Dorsolateral prefrontal cortex (tissue), 120 donors: ENCODE measurements at regions of chr14 and their contacts with region 1.

Region 1: DNA sequence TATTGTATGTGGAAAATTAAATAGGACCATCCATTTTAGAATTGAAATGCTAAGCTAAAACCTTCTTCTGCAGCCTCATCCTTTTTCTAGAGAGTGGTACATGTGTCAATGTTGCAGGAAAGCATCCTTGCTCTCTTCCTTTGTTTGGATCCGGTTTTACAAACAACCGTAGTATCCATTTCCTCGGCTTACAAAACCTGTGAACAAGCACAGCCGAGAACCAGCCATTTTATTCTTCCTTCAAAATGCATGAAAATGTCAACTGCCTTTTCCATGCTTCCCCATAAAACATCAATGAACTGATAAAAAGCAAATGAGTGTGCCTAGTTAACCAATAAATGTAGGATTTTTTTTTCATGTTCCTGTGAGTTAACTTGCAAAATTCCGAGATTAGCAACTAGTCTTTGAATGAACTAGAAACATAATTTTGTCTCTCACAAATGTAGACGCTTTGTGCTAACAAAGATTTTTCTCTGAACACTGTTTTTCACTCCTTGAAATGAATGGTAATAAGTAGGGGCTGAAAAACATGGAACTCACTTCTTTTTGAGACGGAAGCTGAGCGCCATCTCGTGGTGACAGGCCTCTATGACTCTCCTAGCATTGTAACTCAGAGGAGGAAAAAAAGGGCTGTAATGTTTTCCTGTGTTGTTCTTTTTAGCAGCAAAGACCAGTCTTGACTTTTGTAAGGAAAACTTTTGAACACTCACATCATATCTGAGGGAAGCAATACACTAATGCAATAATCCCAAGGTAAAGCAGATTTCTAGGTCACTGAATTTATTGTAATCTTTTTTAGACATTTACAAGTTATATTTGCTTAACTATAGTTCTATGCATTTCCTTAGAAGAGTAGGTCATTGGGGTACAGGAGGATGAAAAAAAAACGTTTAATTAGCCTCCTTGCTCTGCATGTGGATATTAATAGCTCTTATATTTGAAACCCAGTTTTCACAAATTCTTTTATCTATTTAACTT is 157.4 kb upstream of the FOXG1 start:
- DNase-seq: peak; percentile 35 to 91 (median 76)
- H3K4me3 ChIP-seq: peak overlapping the region in 57 of 59 donors; percentile 4 to 59 (median 37)
- H3K27ac ChIP-seq: peak overlapping the region; percentile 1 to 94 (median 83)
- H3K27me3 ChIP-seq: no peaks in the 10 kb centered on the region
- CTCF ChIP-seq: peak; percentile 74 to 95 (median 90)

Region 2: GRCh38 chr14:28142400-28143015 is 466.6 kb before region 1 on chr14:
- intact Hi-C with region 1: loop called in 1 of 2 experiments (anchors 5 kb)
- DNase-seq: peak in 1 of 10 donors; percentile 29
- H3K4me3 ChIP-seq: peak overlapping the region in 15 of 59 donors; percentile 2 to 54 (median 27)
- H3K27ac ChIP-seq: peak overlapping the region in 40 of 59 donors; percentile 3 to 80 (median 50)
- H3K27me3 ChIP-seq: no peaks in the 10 kb centered on the region
- CTCF ChIP-seq: peak in 54 of 56 donors; percentile 5 to 73 (median 60)

Region 3: GRCh38 chr14:28294834-28295440 is 314.2 kb before region 1 on chr14:
- intact Hi-C with region 1: loop called in 1 of 2 experiments (anchors 10 kb)
- DNase-seq: no peak
- H3K4me3 ChIP-seq: no peak overlapping the region
- H3K27ac ChIP-seq: no peak overlapping the region
- H3K27me3 ChIP-seq: no peaks in the 10 kb centered on the region
- CTCF ChIP-seq: peak in 8 of 56 donors; percentile 9 to 25 (median 17)

Region 4: DNA sequence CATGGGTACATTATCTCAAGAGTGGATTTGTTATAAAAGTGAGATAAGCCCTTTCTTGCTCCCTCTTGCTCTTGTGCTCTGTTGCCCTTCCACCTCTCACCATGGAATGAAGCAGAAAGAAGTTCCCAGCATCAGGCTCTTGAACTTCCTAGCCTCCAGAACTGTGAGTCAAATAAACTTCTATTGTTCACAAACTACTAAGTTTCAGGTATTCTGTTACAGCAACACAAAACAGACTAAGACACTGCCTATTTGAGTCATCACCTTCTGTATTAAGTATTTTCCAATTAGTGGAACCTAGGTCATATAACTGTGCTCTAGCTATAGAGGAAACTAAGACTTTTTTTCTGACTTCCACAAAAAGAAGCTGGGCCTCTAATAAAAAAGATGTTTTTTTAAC is 43.8 kb before region 1 on chr14:
- intact Hi-C with region 1: no loop called
- DNase-seq: no peak
- H3K4me3 ChIP-seq: no peak overlapping the region
- H3K27ac ChIP-seq: no peak overlapping the region
- H3K27me3 ChIP-seq: no peaks in the 10 kb centered on the region
- CTCF ChIP-seq: no peak

Region 5: DNA sequence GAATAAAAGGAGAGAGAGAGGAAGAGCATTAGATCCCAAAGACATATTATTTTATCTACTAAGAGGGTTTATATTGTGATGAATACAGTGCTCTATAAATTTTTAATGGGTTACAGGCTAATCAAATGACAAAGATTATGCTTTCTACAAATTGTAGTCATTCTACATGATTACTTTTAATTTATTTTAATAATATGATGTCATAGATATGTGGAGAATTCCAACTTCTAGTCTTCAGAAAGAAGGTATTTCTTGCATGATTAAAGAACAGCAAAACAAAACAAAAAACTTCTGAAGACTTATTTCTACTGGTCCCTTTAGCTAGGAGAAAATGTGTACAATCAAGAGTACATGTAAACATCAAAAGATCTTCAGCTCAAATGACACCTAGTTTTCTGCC is 86.0 kb after region 1 on chr14:
- intact Hi-C with region 1: no loop called
- DNase-seq: no peak
- H3K4me3 ChIP-seq: no peak overlapping the region
- H3K27ac ChIP-seq: no peak overlapping the region
- H3K27me3 ChIP-seq: no peaks in the 10 kb centered on the region
- CTCF ChIP-seq: no peak